Naive thymus-derived CD4-positive, alpha-beta T cell (primary cell): ENCODE measurements at regions of chr1 and their contacts with region 1.

Region 1: DNA sequence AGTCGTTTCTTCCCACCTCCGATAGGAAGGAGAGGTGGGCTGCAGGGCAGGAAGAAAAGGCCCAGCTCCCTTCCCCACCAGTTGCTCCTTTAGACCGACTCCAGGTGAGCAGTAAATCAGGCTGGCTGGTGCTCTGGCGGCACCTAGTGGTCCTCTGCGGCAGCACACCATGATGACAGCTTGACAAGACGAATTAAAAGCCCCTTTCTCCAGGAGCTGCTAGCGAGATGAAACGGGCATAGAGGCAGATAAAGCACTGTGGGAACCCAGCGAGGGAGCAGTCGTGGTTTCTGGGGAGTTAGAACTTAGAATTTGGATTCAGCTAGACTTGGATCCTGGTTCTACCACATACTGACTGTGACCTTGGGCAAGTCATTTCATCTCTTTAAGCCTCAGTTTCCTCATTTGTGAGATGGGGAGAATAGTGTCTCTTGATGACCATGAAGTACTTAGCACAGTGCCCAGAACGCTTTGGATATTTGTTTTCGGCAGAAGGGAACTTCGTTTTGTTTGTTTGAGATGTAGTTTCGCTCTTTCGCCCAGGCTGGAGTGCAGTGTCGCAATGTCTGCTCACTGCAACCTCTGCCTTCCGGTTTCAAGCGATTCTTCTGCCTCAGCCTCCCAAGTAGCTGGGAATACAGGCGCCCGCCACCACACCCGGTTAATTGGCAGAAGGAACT is 21.8 kb upstream of the COL9A2 start:
- DNase-seq: peak; percentile 81 to 91 (median 87)
- ATAC-seq: peak; percentile 99
- H3K4me3 ChIP-seq: no peak overlapping the region
- H3K4me3 Mint-ChIP-seq: peak overlapping the region; percentile 37 to 76 (median 57)
- H3K27ac ChIP-seq: no peak overlapping the region
- H3K27ac Mint-ChIP-seq: peak overlapping the region in 8 of 9 donors; percentile 16 to 86 (median 70)
- H3K4me1 ChIP-seq: peaks cover 6 to 35% of the 10 kb centered on the region in 2 donors
- H3K4me1 Mint-ChIP-seq: peaks cover 33 to 50% (median 49%) of the 10 kb centered on the region in 7 donors
- H3K27me3 ChIP-seq: no peaks in the 10 kb centered on the region
- H3K27me3 Mint-ChIP-seq: no peaks in the 10 kb centered on the region

Region 2: DNA sequence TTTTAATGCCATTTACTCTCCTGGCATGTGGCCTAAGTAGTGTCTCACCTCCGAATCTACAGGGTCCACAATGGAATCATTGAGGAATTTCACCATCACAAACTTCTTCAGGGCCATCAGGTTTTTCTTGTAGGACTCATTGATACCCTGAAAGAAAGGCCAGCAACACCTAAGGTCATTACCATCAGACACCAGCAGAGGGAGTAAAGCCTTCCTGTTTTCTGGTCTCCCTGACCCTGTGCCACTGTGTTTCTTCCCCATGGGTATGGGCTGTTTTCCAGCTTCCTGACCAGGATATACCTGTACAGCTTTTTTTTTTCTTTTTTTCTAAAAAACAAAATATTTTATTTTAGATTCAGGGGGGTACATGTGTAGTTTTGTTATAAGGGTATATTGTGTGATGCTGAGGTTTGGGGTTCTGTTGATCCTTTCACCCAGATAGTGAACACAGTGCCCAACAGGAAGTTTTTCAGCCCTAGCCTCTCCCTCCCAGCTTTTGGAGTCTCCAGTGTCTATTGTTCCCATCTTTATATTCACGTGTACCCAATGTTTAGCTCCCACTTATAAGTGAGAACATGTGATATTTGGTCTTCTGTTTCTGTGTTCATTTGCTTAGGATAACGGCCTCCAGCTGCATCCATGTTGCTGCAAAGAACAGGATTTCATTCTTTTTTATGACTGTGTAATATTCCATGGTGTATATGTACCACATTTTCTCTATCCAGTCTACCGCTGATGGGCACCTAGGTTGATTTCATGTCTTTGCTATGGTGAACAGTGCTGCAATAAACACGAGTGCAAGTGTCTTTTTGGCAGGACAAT is 260.2 kb before region 1 on chr1:
- CTCF ChIA-PET with region 1: interaction called, 7 read pairs
- POLR2A ChIA-PET with region 1: no interaction called
- intact Hi-C with region 1: loop called (anchors 1 to 2 kb)
- DNase-seq: peak in 8 of 9 donors; percentile 13 to 59 (median 48)
- ATAC-seq: peak; percentile 88
- H3K4me3 ChIP-seq: no peak overlapping the region
- H3K4me3 Mint-ChIP-seq: no peak overlapping the region
- H3K27ac ChIP-seq: no peak overlapping the region
- H3K27ac Mint-ChIP-seq: peak overlapping the region in 6 of 9 donors; percentile 34 to 91 (median 66)
- H3K4me1 ChIP-seq: no peaks in the 10 kb centered on the region
- H3K4me1 Mint-ChIP-seq: peaks cover 0 to 24% (median 13%) of the 10 kb centered on the region in 7 donors
- H3K27me3 ChIP-seq: no peaks in the 10 kb centered on the region
- H3K27me3 Mint-ChIP-seq: no peaks in the 10 kb centered on the region

Region 3: GRCh38 chr1:40153073-40153770 is 185.7 kb before region 1 on chr1:
- CTCF ChIA-PET with region 1: interaction called, 152 read pairs
- POLR2A ChIA-PET with region 1: interaction called, 6 read pairs
- intact Hi-C with region 1: loop called (anchors 1 kb)
- DNase-seq: peak in 7 of 9 donors; percentile 26 to 68 (median 53)
- ATAC-seq: peak; percentile 88
- H3K4me3 ChIP-seq: no peak overlapping the region
- H3K4me3 Mint-ChIP-seq: peak overlapping the region in 7 of 10 donors; percentile 18 to 70 (median 52)
- H3K27ac ChIP-seq: no peak overlapping the region
- H3K27ac Mint-ChIP-seq: peak overlapping the region in 8 of 9 donors; percentile 16 to 88 (median 76)
- H3K4me1 ChIP-seq: no peaks in the 10 kb centered on the region
- H3K4me1 Mint-ChIP-seq: peaks cover 0 to 12% (median 10%) of the 10 kb centered on the region in 7 donors
- H3K27me3 ChIP-seq: no peaks in the 10 kb centered on the region
- H3K27me3 Mint-ChIP-seq: peaks cover 0 to 25% (median 0%) of the 10 kb centered on the region in 5 donors

Region 4: DNA sequence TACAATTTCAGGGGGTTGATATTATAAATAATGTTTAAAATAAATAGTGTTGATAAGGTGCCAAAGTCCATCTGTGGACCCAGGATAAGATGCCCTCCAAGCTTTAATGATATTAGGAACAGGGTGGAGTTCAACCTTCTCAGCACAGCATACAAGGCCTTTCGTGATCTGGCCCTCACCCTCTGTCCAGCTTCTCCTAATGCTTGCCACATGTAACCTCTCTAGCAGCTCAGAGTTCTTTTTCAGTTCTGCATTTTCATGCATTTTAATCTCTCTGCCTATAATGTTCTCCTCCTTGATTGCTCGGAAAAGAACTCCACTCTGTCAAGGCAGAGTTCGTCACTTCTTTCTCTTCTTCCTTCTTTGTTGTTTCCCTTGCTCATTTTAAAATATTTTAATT is 13.2 kb after region 1 on chr1:
- CTCF ChIA-PET with region 1: interaction called, 8 read pairs
- POLR2A ChIA-PET with region 1: interaction called, 10 read pairs
- intact Hi-C with region 1: no loop called
- DNase-seq: no peak
- ATAC-seq: peak; percentile 52
- H3K4me3 ChIP-seq: no peak overlapping the region
- H3K4me3 Mint-ChIP-seq: no peak overlapping the region
- H3K27ac ChIP-seq: no peak overlapping the region
- H3K27ac Mint-ChIP-seq: peak overlapping the region in 1 of 9 donors; percentile 18
- H3K4me1 ChIP-seq: no peaks in the 10 kb centered on the region
- H3K4me1 Mint-ChIP-seq: peaks cover 0 to 17% (median 5%) of the 10 kb centered on the region in 7 donors
- H3K27me3 ChIP-seq: no peaks in the 10 kb centered on the region
- H3K27me3 Mint-ChIP-seq: no peaks in the 10 kb centered on the region

Region 5: DNA sequence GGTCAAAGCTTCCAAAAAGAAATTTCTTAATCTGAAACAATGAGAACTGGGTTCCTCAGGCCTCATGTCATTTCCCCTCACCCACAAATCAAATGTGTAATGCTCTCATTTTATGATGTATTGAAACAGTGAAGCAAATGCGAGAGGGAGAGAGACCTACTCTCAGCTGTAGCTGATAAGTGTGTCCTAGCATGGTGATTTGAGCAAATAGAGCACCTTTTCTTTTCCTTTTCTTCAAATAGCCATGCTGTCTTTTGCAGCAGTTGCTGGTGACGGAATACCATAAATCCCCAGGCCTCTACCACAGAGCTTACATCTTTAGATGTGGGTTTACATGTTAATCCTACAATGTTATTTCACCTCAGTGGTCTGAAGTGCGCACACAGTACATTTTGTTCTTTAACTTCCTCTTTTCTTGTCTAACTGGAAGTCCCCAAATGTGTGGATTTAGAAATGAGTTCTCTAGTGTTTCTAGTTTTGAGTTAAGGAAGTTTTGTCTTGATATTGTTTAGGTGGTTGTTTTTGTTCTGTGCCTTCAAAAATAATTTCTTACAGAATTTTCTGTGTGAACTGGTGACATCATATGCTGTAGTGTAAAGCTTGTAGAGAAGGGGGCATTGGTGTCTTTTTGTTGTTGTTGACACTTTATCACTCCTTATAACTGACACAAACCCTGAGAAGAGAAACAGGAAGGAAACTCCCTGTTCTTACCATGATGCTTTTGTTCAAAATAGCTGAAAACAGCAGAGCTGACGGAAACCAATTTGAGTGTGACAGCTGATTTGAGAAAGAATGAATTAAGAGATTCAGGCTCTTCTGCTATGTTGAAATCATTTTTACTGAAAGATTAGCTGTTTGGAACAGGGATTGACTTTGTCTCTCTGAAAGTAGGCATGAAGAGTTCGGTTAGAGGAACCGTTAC is 46.8 kb after region 1 on chr1:
- CTCF ChIA-PET with region 1: interaction called, 16 read pairs
- POLR2A ChIA-PET with region 1: interaction called, 22 read pairs
- intact Hi-C with region 1: loop called (anchors 1 kb)
- DNase-seq: peak in 8 of 9 donors; percentile 55 to 97 (median 94)
- ATAC-seq: peak; percentile 86
- H3K4me3 ChIP-seq: peak overlapping the region; percentile 48
- H3K4me3 Mint-ChIP-seq: peak overlapping the region; percentile 79 to 99 (median 87)
- H3K27ac ChIP-seq: peak overlapping the region; percentile 99
- H3K27ac Mint-ChIP-seq: peak overlapping the region; percentile 97 to 99 (median 98)
- H3K4me1 ChIP-seq: peaks cover 82 to 84% of the 10 kb centered on the region in 2 donors
- H3K4me1 Mint-ChIP-seq: peaks cover 71 to 94% (median 90%) of the 10 kb centered on the region in 7 donors
- H3K27me3 ChIP-seq: no peaks in the 10 kb centered on the region
- H3K27me3 Mint-ChIP-seq: no peaks in the 10 kb centered on the region

Region 6: DNA sequence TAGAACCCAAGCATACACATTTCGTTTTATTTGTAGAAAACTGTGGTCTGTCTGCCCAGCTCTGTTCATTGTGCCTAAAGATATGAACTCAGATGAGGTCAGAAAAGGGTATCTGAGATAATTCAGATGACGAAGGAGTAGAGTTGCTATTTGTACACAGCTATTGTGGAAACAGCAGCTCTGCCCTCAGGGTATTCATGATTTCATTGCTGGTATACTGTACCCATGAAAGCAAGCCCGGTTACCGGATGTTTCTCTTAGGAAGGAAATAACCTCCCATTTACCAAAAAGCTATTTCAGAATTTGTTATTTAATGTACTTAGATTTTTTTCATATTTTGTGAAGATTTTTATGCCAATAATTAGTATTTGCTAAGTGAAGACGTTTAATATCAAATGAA is 72.4 kb after region 1 on chr1:
- CTCF ChIA-PET with region 1: interaction called, 18 read pairs
- POLR2A ChIA-PET with region 1: interaction called, 5 read pairs
- intact Hi-C with region 1: no loop called
- DNase-seq: no peak
- ATAC-seq: no peak
- H3K4me3 ChIP-seq: no peak overlapping the region
- H3K4me3 Mint-ChIP-seq: no peak overlapping the region
- H3K27ac ChIP-seq: no peak overlapping the region
- H3K27ac Mint-ChIP-seq: peak overlapping the region in 2 of 9 donors; percentile 24 to 32
- H3K4me1 ChIP-seq: peaks cover 6 to 10% of the 10 kb centered on the region in 2 donors
- H3K4me1 Mint-ChIP-seq: peaks cover 22 to 71% (median 54%) of the 10 kb centered on the region in 7 donors
- H3K27me3 ChIP-seq: no peaks in the 10 kb centered on the region
- H3K27me3 Mint-ChIP-seq: no peaks in the 10 kb centered on the region